Activated naive CD4-positive, alpha-beta T cell treated with anti-CD3 and anti-CD28 coated beads for 36 hours (primary cell): ENCODE measurements at regions of chr20 and their contacts with region 1.

Region 1: DNA sequence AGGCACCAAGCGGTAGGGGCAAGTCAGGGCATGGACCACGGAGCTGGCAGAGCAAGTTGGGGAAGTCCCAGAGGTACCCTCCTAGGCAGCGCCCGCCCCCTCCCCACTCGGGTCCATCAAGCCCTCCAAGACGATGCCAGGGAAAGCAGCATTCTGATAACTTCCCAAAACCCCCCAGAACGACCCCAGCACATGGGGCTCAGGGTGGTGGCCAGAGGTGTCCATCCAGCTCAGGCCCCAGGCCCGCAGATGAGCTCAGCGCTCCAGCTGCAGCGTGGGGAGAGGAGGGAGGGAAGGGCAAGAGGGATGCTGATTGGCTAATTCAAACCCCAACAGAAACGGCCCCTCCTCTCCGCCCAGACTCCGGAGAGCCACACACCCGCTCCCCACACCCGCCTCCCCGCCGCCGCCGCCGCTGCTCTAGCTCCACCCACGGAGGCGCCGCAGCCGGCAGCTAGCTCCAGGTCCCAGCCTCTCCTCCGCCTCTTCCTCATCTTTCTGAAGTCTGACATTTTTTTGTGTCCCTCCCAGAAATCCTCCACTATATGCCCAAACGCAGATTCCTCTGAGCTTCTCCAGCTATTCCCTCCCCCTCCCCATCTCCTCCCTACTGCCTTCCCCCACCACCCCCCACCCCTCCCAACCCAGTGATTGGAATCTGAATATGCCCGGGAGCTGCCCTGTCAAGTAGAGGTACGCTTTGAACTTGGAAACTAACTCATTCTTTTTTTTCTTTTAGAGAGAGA is 40.3 kb upstream of the TLDC2 start:
- DNase-seq: peak; percentile 94
- H3K4me3 Mint-ChIP-seq: peak overlapping the region; percentile 88
- H3K27ac Mint-ChIP-seq: peak overlapping the region; percentile 87
- H3K4me1 Mint-ChIP-seq: peaks cover 14% of the 10 kb centered on the region
- H3K27me3 Mint-ChIP-seq: no peaks in the 10 kb centered on the region

Region 2: GRCh38 chr20:36573103-36573794 is 262.4 kb before region 1 on chr20 and contains the start of gene TGIF2:
- CTCF ChIA-PET with region 1: no interaction called
- intact Hi-C with region 1: loop called (anchors 5 kb)
- DNase-seq: peak; percentile 90
- H3K4me3 Mint-ChIP-seq: peak within 1 kb of the TSS; percentile 91
- H3K27ac Mint-ChIP-seq: peak within 1 kb of the TSS; percentile 93
- H3K4me1 Mint-ChIP-seq: peaks cover 35% of the 10 kb centered on the region
- H3K27me3 Mint-ChIP-seq: no peaks in the 10 kb centered on the region
- total RNA-seq, gene TGIF2: 32.2 to 33.6 TPM

Region 3: DNA sequence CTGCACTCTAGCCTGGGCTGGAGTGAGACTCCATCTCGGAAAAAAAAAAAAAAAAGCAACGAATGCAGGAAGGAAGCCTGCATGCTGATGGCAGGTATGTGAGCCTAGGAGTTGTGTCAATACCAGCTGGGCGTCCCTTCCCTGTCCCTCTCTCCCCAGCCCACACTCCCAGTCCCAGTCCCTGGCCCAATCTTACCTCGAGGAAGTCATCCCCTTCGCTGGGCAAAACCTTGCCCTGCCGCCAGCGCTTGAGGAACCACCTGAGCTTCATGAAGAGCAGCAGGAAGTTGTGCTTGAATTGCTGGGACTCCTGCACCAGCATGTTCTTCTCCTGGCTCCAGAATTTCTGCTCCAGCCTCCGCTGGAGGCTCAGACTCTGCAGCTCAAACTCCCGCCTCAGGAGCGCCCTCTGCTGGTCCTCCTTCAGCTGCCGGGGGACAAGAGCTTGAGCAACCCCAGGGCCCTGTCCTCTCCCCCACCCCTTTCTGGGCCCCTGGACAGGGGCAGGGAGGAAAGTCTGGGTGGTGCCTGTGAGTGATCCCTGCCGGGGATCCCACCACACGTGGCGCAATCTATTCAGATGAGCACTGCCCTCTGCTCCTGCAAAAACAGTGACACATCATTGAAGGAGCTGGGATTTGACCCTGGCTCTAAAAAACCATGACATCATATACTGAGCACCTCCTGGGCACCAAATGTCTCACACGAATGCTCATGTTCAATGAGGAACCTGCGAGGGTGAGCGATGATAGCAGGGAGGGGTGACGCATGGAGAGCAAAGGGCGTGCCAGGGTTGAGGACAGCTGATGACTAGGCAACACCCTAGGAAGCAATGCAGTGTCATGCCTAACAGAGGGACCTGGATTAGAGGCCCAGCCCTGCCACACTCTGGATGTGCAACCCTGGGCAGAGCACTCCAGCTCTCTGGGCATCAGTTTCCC is 27.0 kb before region 1 on chr20:
- CTCF ChIA-PET with region 1: interaction called, 16 read pairs
- intact Hi-C with region 1: no loop called
- DNase-seq: peak; percentile 87
- H3K4me3 Mint-ChIP-seq: no peak overlapping the region
- H3K27ac Mint-ChIP-seq: no peak overlapping the region
- H3K4me1 Mint-ChIP-seq: no peaks in the 10 kb centered on the region
- H3K27me3 Mint-ChIP-seq: no peaks in the 10 kb centered on the region

Region 4: DNA sequence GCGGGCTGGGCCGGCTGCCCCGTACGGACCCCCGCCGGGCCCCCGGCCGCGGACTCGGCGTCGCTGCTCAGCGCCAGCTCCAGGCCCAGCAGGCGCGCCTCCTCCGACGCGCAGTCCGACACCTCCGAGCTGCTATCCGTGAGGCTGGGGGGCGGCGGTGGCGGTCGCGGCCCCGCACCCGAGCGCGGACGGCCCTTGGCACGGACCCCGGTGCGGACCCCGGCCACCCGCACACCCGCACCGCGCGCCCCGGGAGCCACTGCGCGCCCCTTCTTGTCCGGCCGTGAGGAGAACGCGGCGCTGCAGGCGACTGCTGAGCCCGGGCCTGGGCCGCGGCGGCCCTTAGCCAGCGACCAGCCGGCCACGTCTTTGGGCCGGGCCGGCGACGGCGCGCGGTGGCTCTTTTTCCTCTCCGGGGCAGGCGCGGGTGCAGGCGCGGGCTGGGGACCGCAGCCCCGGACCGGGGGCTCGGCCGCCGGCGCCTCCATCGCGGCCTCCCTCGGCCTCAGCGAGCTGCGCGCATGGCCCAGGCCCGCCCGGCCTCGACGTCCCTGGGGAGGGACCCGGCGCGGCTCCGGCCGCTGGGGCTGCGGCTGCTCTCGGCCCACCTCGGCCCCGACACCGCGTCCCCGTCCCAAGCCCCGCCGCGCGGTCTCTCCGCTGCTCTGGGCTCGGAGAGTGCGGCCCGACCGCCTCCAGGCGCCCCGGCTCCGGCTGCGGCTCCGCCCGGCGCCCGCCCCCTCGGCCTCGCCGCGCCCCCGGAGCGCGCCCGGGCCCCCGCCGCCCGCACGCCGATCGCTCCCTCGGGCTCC is 27.4 kb after region 1 on chr20:
- CTCF ChIA-PET with region 1: interaction called, 11 read pairs
- intact Hi-C with region 1: loop called (anchors 2 kb)
- DNase-seq: no peak
- H3K4me3 Mint-ChIP-seq: no peak overlapping the region
- H3K27ac Mint-ChIP-seq: no peak overlapping the region
- H3K4me1 Mint-ChIP-seq: no peaks in the 10 kb centered on the region
- H3K27me3 Mint-ChIP-seq: peaks cover 21% of the 10 kb centered on the region

Region 5: GRCh38 chr20:37095599-37096414 is 260.2 kb after region 1 on chr20 and contains the start of gene RBL1:
- CTCF ChIA-PET with region 1: no interaction called
- intact Hi-C with region 1: loop called (anchors 5 kb)
- DNase-seq: peak; percentile 91
- H3K4me3 Mint-ChIP-seq: peak within 1 kb of the TSS; percentile 92
- H3K27ac Mint-ChIP-seq: peak within 1 kb of the TSS; percentile 100
- H3K4me1 Mint-ChIP-seq: peaks cover 37% of the 10 kb centered on the region
- H3K27me3 Mint-ChIP-seq: no peaks in the 10 kb centered on the region
- total RNA-seq, gene RBL1: 32.9 to 36.2 TPM